CD8-positive, alpha-beta memory T cell (primary cell): ENCODE measurements at regions of chr13 and their contacts with region 1.

Region 1: DNA sequence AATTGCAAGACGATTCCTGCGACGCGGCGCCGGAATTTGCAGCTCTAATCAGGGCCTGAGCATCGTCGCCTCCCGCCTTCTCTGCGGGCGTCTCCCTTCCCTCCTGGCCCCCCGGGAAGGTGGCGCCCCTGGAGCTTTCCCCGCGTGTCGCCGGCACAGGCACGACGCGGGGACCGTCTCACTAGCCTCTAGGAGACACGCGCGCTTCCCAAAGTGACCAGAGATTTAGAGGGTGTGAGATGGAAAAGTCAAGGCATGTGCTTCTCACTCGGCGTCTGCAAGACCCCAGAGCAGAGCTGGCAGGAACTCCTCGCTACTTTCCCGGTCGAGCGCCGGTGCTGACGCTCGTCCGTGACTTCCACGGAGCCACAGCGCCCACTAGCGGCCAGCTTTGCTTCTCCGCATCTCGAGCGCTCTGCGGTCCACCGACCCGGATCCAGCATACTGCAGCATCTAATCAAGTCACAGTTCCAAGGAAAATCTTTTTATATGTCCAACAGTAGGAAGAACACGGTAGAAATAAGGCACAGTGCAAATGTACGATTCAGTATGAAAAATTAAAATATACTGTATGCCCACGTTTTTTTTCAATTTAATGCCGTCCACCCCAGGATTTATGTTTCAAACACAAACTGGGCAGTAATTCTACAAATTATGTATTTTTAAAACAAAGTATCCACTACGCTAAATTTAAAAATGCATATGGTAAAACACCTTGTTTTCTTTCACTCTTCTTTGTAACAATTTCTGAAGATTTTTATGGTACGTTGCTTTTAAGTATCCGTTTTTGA is 977 bp upstream of the EFNB2 start:
- DNase-seq: peak; percentile 76 to 90 (median 82)
- H3K4me3 ChIP-seq: peak overlapping the region; percentile 80
- H3K4me3 Mint-ChIP-seq: peak overlapping the region; percentile 86 to 97 (median 94)
- H3K27ac ChIP-seq: peak overlapping the region; percentile 31
- H3K27ac Mint-ChIP-seq: peak overlapping the region in 7 of 8 donors; percentile 7 to 93 (median 78)
- H3K4me1 ChIP-seq: peaks cover 24% of the 10 kb centered on the region
- H3K4me1 Mint-ChIP-seq: peaks cover 22 to 31% (median 25%) of the 10 kb centered on the region in 3 donors
- H3K27me3 ChIP-seq: peaks cover 21% of the 10 kb centered on the region
- H3K27me3 Mint-ChIP-seq: peaks cover 18 to 28% of the 10 kb centered on the region in 2 donors

Region 2: GRCh38 chr13:105083992-105084391 is 1452.4 kb before region 1 on chr13:
- CTCF ChIA-PET with region 1: no interaction called
- POLR2A ChIA-PET with region 1: no interaction called
- DNase-seq: no peak
- H3K4me3 ChIP-seq: no peak overlapping the region
- H3K4me3 Mint-ChIP-seq: no peak overlapping the region
- H3K27ac ChIP-seq: no peak overlapping the region
- H3K27ac Mint-ChIP-seq: no peak overlapping the region
- H3K4me1 ChIP-seq: no peaks in the 10 kb centered on the region
- H3K4me1 Mint-ChIP-seq: no peaks in the 10 kb centered on the region
- H3K27me3 ChIP-seq: no peaks in the 10 kb centered on the region
- H3K27me3 Mint-ChIP-seq: peaks cover 0 to 2% of the 10 kb centered on the region in 2 donors

Region 3: DNA sequence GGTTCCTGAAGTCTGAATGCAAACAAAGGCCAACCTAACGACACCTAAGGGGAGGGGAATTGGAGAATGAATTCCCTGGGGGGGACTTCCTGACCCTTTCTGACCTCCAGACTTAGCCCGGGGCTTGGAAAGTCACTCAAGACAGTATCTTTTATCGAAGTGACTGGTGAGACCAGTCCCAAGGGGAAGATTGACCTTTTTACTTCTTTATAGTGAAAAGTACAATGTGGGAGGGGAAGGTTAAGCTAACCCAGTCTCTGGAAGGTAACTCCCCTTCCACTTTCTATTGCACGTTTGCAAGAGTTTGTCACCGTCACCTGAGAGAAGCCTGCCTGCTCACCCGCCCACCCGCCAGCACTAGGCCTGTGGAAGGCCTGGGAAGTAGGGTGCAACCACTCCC is 112.9 kb before region 1 on chr13:
- CTCF ChIA-PET with region 1: no interaction called
- POLR2A ChIA-PET with region 1: no interaction called
- DNase-seq: no peak
- H3K4me3 ChIP-seq: no peak overlapping the region
- H3K4me3 Mint-ChIP-seq: no peak overlapping the region
- H3K27ac ChIP-seq: no peak overlapping the region
- H3K27ac Mint-ChIP-seq: no peak overlapping the region
- H3K4me1 ChIP-seq: no peaks in the 10 kb centered on the region
- H3K4me1 Mint-ChIP-seq: no peaks in the 10 kb centered on the region
- H3K27me3 ChIP-seq: no peaks in the 10 kb centered on the region
- H3K27me3 Mint-ChIP-seq: peaks cover 3 to 19% of the 10 kb centered on the region in 2 donors

Region 4: DNA sequence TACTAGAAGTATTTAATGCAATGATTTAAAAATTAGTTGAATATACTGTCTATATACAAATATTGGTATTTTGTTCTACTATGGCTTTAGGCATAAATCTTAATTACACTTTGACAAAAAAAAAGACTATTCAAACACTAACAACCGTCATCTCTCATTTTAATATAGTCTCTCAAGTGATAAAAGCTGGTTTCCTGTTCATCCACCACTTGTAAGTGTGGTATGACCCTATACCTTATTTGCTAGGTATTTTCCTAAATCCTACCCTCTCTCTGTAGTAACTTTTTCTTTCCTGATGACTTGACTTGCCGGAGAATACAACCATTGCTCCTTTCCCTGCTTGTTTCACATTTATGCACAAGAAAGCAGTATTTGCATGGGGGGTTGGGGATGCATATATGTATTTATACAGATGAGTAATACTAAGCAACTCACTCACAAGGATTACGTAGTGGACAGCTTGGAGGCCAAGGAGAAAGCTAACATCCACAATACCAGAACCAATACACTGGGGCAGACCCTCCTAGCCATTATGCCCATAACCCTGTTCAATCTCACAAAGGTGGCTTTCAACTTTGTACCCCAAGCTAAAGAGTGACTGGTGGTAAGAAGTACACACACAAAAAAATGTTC is 11.7 kb after region 1 on chr13:
- CTCF ChIA-PET with region 1: interaction called, 10 read pairs
- POLR2A ChIA-PET with region 1: interaction called, 4 read pairs
- DNase-seq: no peak
- H3K4me3 ChIP-seq: no peak overlapping the region
- H3K4me3 Mint-ChIP-seq: no peak overlapping the region
- H3K27ac ChIP-seq: no peak overlapping the region
- H3K27ac Mint-ChIP-seq: peak overlapping the region in 6 of 8 donors; percentile 12 to 68 (median 16)
- H3K4me1 ChIP-seq: no peaks in the 10 kb centered on the region
- H3K4me1 Mint-ChIP-seq: peaks cover 36 to 50% (median 42%) of the 10 kb centered on the region in 3 donors
- H3K27me3 ChIP-seq: no peaks in the 10 kb centered on the region
- H3K27me3 Mint-ChIP-seq: no peaks in the 10 kb centered on the region

Region 5: GRCh38 chr13:106567474-106568298 is 31.2 kb after region 1 on chr13 and contains the start of gene ARGLU1:
- CTCF ChIA-PET with region 1: interaction called, 36 read pairs
- POLR2A ChIA-PET with region 1: interaction called, 6 read pairs
- DNase-seq: peak; percentile 91 to 95 (median 94)
- H3K4me3 ChIP-seq: peak within 1 kb of the TSS; percentile 75
- H3K4me3 Mint-ChIP-seq: peak within 1 kb of the TSS; percentile 88 to 99 (median 98)
- H3K27ac ChIP-seq: peak within 1 kb of the TSS; percentile 93
- H3K27ac Mint-ChIP-seq: peak within 1 kb of the TSS; percentile 87 to 98 (median 97)
- H3K4me1 ChIP-seq: peaks cover 52% of the 10 kb centered on the region
- H3K4me1 Mint-ChIP-seq: peaks cover 47 to 63% (median 59%) of the 10 kb centered on the region in 3 donors
- H3K27me3 ChIP-seq: no peaks in the 10 kb centered on the region
- H3K27me3 Mint-ChIP-seq: no peaks in the 10 kb centered on the region
- total RNA-seq, gene ARGLU1: 85.8 to 89.0 TPM

Region 6: GRCh38 chr13:106649495-106649894 is 113.1 kb after region 1 on chr13:
- CTCF ChIA-PET with region 1: no interaction called
- POLR2A ChIA-PET with region 1: no interaction called
- DNase-seq: no peak
- H3K4me3 ChIP-seq: no peak overlapping the region
- H3K4me3 Mint-ChIP-seq: no peak overlapping the region
- H3K27ac ChIP-seq: no peak overlapping the region
- H3K27ac Mint-ChIP-seq: no peak overlapping the region
- H3K4me1 ChIP-seq: no peaks in the 10 kb centered on the region
- H3K4me1 Mint-ChIP-seq: no peaks in the 10 kb centered on the region
- H3K27me3 ChIP-seq: no peaks in the 10 kb centered on the region
- H3K27me3 Mint-ChIP-seq: peaks cover 0 to 5% of the 10 kb centered on the region in 2 donors

Region 7: DNA sequence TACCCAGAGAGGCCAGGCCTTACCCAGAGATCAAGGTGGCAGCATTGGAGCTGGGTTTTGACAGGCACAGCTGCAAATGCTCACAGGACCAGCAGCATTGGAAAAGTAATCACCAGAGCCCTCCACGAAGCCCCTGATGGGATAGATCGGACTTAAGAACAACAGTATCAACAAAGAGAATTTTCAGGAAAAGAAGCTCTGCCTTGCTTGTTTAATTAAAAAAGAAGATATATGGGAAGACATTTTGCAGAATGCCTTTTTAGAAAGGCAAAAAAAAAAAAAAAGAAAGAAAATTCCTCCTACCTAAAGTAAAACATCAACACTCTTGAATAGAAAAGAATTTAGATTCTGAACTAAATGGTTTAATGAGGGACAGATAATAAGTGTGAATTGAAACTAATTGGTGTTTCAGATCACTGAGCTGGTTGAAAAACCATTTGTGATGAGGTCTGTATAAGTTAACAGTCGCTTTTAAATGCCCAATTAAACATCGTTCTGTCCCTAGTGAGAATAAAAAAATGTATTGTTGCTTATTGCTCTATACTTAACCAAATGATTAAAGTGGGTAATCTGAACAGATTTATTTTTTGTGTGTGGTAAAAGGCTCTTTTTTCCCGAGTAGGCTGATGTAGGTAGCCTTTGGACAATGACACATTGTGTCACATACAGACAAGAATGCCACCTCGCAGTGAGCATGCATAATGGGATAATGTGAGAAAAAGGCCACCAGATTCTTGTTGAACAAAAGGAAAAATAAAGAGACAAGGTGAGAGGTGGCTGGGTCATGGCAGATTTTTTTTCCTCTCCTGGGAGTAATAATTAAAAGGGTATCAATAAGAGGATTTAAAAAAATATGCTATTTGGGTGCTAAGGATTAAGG is 124.5 kb after region 1 on chr13:
- CTCF ChIA-PET with region 1: no interaction called
- POLR2A ChIA-PET with region 1: no interaction called
- DNase-seq: no peak
- H3K4me3 ChIP-seq: no peak overlapping the region
- H3K4me3 Mint-ChIP-seq: no peak overlapping the region
- H3K27ac ChIP-seq: no peak overlapping the region
- H3K27ac Mint-ChIP-seq: peak overlapping the region in 1 of 8 donors; percentile 76
- H3K4me1 ChIP-seq: no peaks in the 10 kb centered on the region
- H3K4me1 Mint-ChIP-seq: no peaks in the 10 kb centered on the region
- H3K27me3 ChIP-seq: no peaks in the 10 kb centered on the region
- H3K27me3 Mint-ChIP-seq: peaks cover 7 to 11% of the 10 kb centered on the region in 2 donors